ENCODE measurements at regions of chr2 and their contacts with region 1.

Region 1: GRCh38 chr2:150625300-150625699 is 137.8 kb upstream of the RND3 start:
- DNase-seq: peak; percentile 90
- H3K4me3 ChIP-seq: no peak overlapping the region
- H3K27ac ChIP-seq: peak overlapping the region; percentile 61
- H3K4me1 ChIP-seq: peaks cover 27% of the 10 kb centered on the region
- H3K27me3 ChIP-seq: no peaks in the 10 kb centered on the region
- CTCF ChIP-seq: no peak

Region 2: GRCh38 chr2:149388120-149388798 is 1237.0 kb before region 1 on chr2:
- CTCF ChIA-PET with region 1: no interaction called
- dilution Hi-C with region 1: no loop called
- in situ Hi-C with region 1: no loop called
- intact Hi-C with region 1: no loop called
- DNase-seq: no peak
- H3K4me3 ChIP-seq: no peak overlapping the region
- H3K27ac ChIP-seq: no peak overlapping the region
- H3K4me1 ChIP-seq: no peaks in the 10 kb centered on the region
- H3K27me3 ChIP-seq: no peaks in the 10 kb centered on the region
- CTCF ChIP-seq: peak in 1 of 2 donors; percentile 9

Region 3: DNA sequence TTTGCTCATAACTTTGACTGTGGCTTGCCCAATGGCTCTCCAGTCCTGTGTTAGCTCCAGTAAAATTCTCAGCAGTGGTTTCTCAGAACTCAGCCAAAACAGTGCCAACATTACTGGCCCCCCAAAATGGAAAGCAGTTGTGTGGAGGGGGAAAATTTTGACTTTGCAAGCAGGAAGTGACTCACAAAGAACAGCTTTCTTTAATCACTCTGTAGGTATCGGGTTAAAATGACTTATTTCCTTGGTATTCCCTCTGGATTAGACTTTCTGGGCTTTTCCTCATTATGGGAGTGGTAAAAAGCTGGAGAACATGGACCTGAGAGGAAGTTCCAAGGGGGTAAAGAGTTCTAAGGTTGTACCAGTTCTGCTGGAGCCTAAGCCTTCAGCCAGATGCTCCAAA is 37.8 kb after region 1 on chr2:
- CTCF ChIA-PET with region 1: no interaction called
- dilution Hi-C with region 1: no loop called
- in situ Hi-C with region 1: no loop called
- intact Hi-C with region 1: loop called (anchors 5 kb)
- DNase-seq: peak; percentile 83
- H3K4me3 ChIP-seq: no peak overlapping the region
- H3K27ac ChIP-seq: peak overlapping the region; percentile 74
- H3K4me1 ChIP-seq: peaks cover 12% of the 10 kb centered on the region
- H3K27me3 ChIP-seq: no peaks in the 10 kb centered on the region
- CTCF ChIP-seq: no peak

Region 4: DNA sequence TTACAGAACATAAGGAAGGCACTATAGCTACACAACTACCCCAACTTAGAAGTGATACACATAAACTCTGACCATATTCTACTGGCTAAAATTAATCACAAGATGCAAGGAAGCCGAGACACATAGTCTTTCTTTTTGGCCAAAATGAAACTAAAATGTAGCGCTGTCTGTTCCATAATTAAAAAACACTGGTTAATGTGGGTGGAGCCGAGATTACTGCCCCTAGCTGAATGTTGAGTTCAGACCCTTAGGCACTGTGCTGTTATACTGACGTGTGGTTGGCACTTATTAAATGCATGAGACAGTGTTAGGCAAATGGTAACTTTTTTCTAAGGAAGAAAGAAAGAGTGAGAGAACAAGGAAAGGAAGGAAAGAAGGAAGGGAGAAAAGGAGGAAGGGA is 116.8 kb after region 1 on chr2:
- CTCF ChIA-PET with region 1: no interaction called
- dilution Hi-C with region 1: no loop called
- in situ Hi-C with region 1: no loop called
- intact Hi-C with region 1: no loop called
- DNase-seq: no peak
- H3K4me3 ChIP-seq: no peak overlapping the region
- H3K27ac ChIP-seq: no peak overlapping the region
- H3K4me1 ChIP-seq: no peaks in the 10 kb centered on the region
- H3K27me3 ChIP-seq: no peaks in the 10 kb centered on the region
- CTCF ChIP-seq: no peak

Measured in mammary epithelial cell (primary cell).